ENCODE measurements at regions of chr22 and their contacts with region 1.

Region 1: DNA sequence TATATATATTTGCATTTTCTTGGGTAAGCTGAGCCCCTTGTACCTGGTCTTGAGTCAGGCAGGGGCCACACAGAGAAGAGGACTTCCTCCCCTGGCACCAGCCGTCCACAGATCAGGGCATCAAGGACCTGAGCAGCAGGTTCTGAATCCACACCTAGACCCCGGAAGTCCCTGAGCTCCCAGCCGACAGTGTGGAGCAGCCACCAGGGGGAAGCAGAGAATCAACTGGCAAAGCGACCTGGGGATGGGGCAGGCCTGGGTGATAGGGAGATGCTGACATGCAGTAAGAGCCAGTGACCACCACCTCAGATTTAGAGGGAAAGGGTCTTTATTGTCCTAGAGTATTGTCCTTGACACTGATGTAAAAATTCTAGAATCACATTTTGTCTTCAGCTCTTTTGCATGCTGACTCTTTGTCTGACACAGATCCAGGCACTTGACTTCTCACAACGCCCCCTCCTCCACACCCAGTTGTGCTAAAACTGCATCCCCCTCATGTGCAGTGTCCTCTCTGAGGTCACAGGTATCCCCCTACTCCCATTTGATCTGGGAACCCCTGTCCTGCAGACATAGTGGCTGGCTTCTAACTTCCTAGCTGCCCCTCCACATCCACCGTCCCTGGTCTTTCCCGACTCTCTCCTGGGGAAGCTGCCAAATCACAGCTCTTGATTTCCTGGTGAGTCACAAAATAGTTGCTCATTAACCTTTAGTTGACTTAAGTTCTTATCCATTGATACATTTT is 109.3 kb downstream of the GGTLC2 start:
- DNase-seq: peak; percentile 55
- ATAC-seq: peak; percentile 89
- H3K4me3 Mint-ChIP-seq: no peak overlapping the region
- H3K27ac Mint-ChIP-seq: peak overlapping the region; percentile 24
- H3K4me1 Mint-ChIP-seq: peaks cover 26% of the 10 kb centered on the region
- H3K27me3 Mint-ChIP-seq: no peaks in the 10 kb centered on the region
- CTCF ChIP-seq: no peak

Region 2: DNA sequence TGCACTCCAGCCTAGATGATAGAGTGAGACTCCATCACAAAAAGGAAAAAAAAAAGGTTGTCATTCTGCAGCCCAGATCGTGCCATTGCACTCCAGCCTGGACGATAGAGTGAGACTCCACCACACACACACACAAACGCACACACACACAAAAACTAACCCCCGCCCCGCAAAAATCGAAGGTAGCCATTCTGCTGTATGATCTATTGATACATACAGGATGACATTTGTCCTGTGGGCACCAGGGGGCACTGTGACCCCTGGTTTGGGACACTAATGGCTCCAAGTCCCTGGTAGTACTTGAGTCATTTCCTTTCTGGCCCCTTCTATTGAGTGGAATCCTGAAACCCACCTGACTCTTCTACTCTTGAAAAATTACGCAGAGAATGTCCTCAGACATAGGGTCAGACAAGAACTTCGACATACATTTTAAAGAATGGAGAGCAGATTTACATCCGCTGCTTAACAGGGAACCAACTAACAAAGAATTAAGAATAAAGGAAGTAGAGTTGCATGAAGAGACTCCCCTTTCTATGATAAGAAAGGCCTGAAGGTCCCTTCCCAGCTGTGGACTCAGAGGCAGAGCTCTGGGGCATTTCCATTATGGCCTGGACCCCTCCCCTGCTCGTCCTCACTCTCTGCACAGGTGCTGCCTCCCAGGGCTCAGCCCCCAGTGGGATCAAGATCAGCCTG is 159.6 kb before region 1 on chr22:
- CTCF ChIA-PET with region 1: no interaction called
- POLR2A ChIA-PET with region 1: no interaction called
- intact Hi-C with region 1: loop called (anchors 2 kb)
- DNase-seq: peak; percentile 53
- ATAC-seq: peak; percentile 90
- H3K4me3 Mint-ChIP-seq: no peak overlapping the region
- H3K27ac Mint-ChIP-seq: peak overlapping the region; percentile 46
- H3K4me1 Mint-ChIP-seq: peaks cover 27% of the 10 kb centered on the region
- H3K27me3 Mint-ChIP-seq: no peaks in the 10 kb centered on the region
- CTCF ChIP-seq: no peak

Region 3: DNA sequence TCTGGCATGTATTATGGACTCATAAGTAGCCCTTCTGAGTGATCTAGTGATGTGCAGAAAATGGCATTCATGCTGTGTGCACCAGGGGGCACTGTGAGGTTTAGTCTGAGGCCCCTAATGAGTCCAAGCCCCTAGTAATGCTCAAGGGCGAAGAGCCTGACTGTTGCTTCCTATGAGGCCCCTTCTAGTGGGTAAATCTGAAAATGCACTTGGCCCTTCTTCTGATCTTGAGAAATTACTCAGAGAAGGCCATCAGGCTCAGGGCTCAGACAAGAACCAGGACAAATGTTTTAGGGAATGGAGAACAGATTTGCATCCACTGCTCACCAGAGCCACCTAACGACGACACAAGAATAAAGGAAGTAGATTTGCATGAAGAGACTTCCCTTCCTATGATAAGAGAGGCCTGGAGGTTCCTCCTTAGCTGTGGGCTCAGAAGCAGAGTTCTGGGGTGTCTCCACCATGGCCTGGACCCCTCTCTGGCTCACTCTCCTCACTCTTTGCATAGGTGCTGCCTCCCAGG is 33.4 kb before region 1 on chr22:
- CTCF ChIA-PET with region 1: interaction called, 21 read pairs
- POLR2A ChIA-PET with region 1: interaction called, 7 read pairs
- intact Hi-C with region 1: loop called (anchors 1 kb)
- DNase-seq: peak; percentile 41
- ATAC-seq: peak; percentile 68
- H3K4me3 Mint-ChIP-seq: peak overlapping the region; percentile 68
- H3K27ac Mint-ChIP-seq: peak overlapping the region; percentile 94
- H3K4me1 Mint-ChIP-seq: peaks cover 58% of the 10 kb centered on the region
- H3K27me3 Mint-ChIP-seq: no peaks in the 10 kb centered on the region
- CTCF ChIP-seq: no peak

Region 4: DNA sequence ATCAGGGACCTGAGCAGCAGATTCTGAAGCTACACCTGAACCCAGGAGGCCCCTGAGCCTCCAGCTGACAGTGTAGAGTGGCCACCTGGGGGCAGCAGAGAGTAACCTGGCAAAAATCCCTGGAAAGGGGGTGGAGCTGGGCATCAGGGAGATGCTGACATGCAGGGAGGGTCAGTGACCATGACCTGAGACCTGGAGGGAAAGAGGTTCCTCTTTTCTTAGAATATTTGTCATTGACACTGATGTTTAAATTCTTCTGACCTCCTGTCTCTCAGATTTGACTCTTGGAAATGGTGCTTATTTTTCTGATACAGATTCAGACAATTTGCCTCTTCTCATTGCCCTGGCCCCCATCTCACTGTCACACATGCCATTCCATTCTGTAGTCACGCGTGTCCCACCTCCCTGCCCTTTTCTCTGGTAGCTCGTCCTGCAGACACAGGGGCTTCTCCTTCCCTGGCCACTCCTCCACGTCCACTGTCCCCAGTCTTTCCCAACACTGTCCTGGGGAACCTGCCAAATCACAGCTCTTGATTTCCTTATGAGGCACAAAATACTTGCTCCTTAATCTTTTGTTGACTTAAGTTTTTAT is 16.7 kb after region 1 on chr22:
- CTCF ChIA-PET with region 1: interaction called, 11 read pairs
- POLR2A ChIA-PET with region 1: no interaction called
- intact Hi-C with region 1: no loop called
- DNase-seq: no peak
- ATAC-seq: peak; percentile 40
- H3K4me3 Mint-ChIP-seq: no peak overlapping the region
- H3K27ac Mint-ChIP-seq: no peak overlapping the region
- H3K4me1 Mint-ChIP-seq: peaks cover 28% of the 10 kb centered on the region
- H3K27me3 Mint-ChIP-seq: peaks cover 17% of the 10 kb centered on the region
- CTCF ChIP-seq: peak; percentile 20

Region 5: DNA sequence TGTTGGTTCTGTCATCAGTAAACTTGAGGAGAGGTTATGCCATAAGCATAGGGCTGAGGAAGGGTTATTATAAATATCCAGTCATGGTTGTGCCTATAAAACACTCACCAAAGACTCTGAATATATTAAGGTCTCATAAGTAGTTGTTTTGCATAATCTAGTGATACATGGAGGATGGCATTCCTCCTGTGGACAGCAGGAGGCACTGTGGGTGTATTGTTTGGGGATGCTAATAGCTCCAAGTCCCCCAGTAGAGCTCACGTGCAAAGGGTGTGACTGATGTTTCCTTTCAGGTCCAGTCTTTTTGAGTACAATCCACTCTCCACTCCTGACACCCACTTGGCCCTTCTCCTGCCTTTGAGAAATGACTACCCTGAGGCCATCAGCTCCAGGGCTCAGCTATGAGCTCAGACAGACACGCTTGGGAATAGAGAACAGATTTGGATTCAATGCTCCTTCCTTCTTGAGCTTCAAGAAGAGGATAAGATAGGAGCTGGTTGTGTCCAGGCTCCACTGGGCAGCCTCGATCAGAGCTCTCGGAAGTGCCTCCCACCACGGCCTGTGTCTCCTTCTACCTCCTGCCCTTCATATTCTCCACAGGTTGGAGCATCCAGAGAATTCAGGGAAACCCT is 48.8 kb after region 1 on chr22:
- CTCF ChIA-PET with region 1: interaction called, 7 read pairs
- POLR2A ChIA-PET with region 1: no interaction called
- intact Hi-C with region 1: loop called (anchors 5 kb)
- DNase-seq: no peak
- ATAC-seq: no peak
- H3K4me3 Mint-ChIP-seq: no peak overlapping the region
- H3K27ac Mint-ChIP-seq: no peak overlapping the region
- H3K4me1 Mint-ChIP-seq: peaks cover 10% of the 10 kb centered on the region
- H3K27me3 Mint-ChIP-seq: peaks cover 14% of the 10 kb centered on the region
- CTCF ChIP-seq: no peak

Region 6: DNA sequence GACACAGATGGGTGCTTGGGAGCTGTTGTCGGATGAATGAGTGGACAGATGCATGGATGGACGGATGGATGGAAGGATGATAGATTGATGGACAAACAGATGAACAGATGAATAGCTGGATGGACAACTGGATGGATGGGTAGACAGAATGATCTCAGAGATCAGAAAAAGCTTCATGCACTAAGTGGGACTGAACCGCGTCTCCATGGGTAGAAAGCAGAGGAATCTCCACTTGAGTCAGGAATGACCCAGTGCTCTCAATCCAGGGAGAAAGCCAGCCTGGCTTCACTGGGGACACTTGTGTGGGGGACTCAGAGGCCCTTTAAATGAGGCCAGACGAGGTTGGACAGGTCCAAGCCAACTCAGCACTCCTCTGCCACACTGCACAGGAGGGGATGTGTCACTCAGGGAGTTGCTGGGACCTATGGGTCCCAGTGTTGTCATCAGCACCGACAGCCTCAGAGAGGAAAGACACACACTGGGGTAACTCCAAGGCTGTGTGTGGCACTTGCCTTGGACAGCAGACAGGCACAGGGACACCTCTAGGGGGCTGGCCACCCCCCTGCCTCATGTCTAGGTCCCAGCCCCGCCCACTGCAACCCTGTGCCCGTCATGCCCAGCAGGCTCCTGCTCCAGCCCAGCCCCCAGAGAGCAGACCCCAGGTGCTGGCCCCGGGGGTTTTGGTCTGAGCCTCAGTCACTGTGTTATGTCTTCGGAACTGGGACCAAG is 139.5 kb after region 1 on chr22:
- CTCF ChIA-PET with region 1: no interaction called
- POLR2A ChIA-PET with region 1: no interaction called
- intact Hi-C with region 1: no loop called
- DNase-seq: peak; percentile 27
- ATAC-seq: peak; percentile 53
- H3K4me3 Mint-ChIP-seq: peak overlapping the region; percentile 75
- H3K27ac Mint-ChIP-seq: peak overlapping the region; percentile 82
- H3K4me1 Mint-ChIP-seq: peaks cover 77% of the 10 kb centered on the region
- H3K27me3 Mint-ChIP-seq: peaks cover 8% of the 10 kb centered on the region
- CTCF ChIP-seq: no peak